ENCODE measurements at regions of chr1 and their contacts with region 1.

Region 1: DNA sequence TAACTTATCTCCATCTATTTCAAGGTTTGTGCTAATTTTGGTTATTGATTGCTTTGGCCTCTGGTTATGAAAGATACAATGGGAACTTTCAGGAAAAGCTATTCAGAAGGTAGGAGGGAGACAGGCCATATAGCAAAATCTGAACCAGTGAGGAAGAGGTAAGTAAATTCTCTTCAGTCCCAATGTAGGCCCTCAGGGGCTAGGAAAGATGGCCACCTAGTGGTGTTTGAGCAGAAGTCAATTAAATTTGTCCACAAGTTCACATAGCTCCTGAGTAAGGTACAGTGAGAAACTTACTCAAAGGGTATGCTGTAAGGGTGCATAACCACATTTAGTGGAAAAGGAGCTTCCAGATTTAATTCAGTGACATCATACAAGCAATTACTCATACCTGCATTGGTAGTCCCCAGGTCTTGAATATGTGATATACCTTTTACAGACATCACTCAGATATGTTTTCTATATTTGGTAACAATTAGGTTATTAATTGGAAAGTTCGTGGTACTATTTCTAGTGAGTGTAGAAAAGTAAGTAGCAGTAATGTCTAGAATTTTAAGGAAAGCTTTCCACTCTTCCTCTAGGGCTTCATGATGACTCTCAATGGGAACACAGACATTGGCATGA is 21.4 kb upstream of the FMO1 start:
- DNase-seq: no peak
- ATAC-seq: peak in 2 of 4 donors; percentile 42 to 55
- H3K4me3 ChIP-seq: no peak overlapping the region
- H3K27ac ChIP-seq: no peak overlapping the region
- H3K4me1 ChIP-seq: no peaks in the 10 kb centered on the region
- H3K27me3 ChIP-seq: no peaks in the 10 kb centered on the region
- CTCF ChIP-seq: peak; percentile 63

Region 2: DNA sequence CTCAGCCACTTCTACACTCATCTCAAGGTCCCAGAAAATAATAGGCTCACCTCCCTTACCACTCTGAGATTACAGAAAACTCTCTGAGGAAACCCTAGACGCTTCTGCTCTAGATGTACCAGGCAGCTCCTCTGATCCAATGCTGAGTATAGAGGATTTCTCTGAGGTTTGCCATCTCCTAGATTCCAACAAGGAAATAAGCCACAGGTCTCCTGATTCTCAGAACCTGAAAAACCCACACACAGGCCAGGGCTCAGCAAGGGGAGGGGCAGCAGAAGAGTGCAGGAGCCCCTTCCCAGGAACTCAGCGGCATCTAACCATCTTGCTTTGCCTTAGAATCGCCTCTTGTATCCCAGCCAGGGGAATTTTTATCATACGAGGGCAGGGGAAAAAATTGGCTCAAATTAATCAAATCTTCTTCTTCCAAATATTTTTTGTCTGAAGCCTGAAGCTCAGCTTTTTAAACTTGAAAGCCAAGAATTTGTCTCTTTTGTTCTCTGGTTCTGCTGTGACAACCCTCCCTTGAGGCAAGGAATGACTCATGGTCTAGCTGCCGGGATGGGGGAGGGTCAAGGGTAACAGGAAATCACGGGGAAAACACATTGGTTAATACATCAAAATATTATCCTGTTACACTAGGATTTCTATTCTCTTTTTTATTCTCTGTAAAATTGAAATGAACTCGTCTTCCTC is 664.1 kb before region 1 on chr1:
- intact Hi-C with region 1: no loop called
- DNase-seq: peak; percentile 45 to 65
- ATAC-seq: peak; percentile 59 to 83 (median 73)
- H3K4me3 ChIP-seq: peak overlapping the region; percentile 24
- H3K27ac ChIP-seq: peak overlapping the region; percentile 67
- H3K4me1 ChIP-seq: peaks cover 7% of the 10 kb centered on the region
- H3K27me3 ChIP-seq: no peaks in the 10 kb centered on the region
- CTCF ChIP-seq: no peak

Region 3: GRCh38 chr1:170967042-170967910 is 259.6 kb before region 1 on chr1:
- intact Hi-C with region 1: loop called in 1 of 2 experiments (anchors 1 kb)
- DNase-seq: no peak
- ATAC-seq: peak in 1 of 4 donors; percentile 54
- H3K4me3 ChIP-seq: no peak overlapping the region
- H3K27ac ChIP-seq: no peak overlapping the region
- H3K4me1 ChIP-seq: no peaks in the 10 kb centered on the region
- H3K27me3 ChIP-seq: no peaks in the 10 kb centered on the region
- CTCF ChIP-seq: peak; percentile 50

Region 4: GRCh38 chr1:171081314-171081753 is 145.5 kb before region 1 on chr1:
- intact Hi-C with region 1: loop called in 1 of 2 experiments (anchors 2 kb)
- DNase-seq: no peak
- ATAC-seq: no peak
- H3K4me3 ChIP-seq: no peak overlapping the region
- H3K27ac ChIP-seq: peak overlapping the region; percentile 12
- H3K4me1 ChIP-seq: no peaks in the 10 kb centered on the region
- H3K27me3 ChIP-seq: no peaks in the 10 kb centered on the region
- CTCF ChIP-seq: peak; percentile 35

Region 5: GRCh38 chr1:171188388-171189266 is 38.2 kb before region 1 on chr1:
- intact Hi-C with region 1: no loop called
- DNase-seq: peak in 1 of 2 donors; percentile 49
- ATAC-seq: peak in 3 of 4 donors; percentile 42 to 66 (median 59)
- H3K4me3 ChIP-seq: peak overlapping the region; percentile 62
- H3K27ac ChIP-seq: peak overlapping the region; percentile 62
- H3K4me1 ChIP-seq: no peaks in the 10 kb centered on the region
- H3K27me3 ChIP-seq: no peaks in the 10 kb centered on the region
- CTCF ChIP-seq: peak; percentile 66

Region 6: DNA sequence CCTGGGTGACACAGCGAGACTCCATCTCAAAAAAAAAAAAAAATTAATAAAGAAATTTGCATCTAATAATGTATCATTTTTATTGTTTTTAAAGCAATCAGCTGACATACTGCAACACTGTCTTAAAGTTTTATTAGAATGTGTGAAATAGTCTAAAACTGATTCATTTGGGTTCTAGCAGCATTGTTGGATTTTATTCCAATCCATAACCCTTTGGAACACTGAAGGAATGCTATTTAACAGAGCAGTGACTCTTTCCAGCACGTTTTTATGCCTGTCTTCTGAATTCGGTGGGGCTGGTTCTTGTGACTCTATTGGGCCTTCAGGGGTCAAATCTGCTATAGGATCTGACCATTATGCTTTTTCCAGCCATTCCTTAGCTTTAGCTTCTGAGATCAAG is 69.0 kb after region 1 on chr1:
- intact Hi-C with region 1: no loop called
- DNase-seq: no peak
- ATAC-seq: no peak
- H3K4me3 ChIP-seq: no peak overlapping the region
- H3K27ac ChIP-seq: no peak overlapping the region
- H3K4me1 ChIP-seq: no peaks in the 10 kb centered on the region
- H3K27me3 ChIP-seq: no peaks in the 10 kb centered on the region
- CTCF ChIP-seq: no peak